ENCODE measurements at regions of chr14 and their contacts with region 1.

Region 1: DNA sequence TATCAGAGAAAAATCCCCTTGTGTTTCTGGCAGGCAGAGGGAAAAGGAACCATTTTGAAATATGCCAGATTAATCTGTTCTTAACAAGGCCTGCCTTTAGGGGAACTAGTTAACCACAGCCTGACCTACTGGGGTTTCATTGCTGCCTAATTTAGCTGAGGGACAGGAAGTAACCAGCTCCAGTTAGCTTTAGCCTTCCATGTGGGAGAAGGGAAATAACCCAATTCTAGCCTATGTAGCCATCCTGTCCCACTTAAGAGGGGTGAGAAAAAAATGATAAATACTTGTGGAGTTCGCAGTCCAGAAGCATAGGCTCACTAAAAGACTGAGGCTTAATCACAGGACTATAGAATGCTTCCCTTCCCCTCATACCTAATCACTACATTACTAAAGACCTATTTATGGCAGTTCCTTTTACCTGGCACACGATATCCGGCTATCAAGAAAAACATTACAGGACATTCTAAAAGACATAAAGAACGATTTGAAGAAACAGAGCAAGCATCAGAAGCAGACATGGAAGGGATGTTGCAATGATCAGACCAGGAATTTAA is 22.8 kb downstream of the COX8C start:
- DNase-seq: no peak
- H3K4me3 Mint-ChIP-seq: no peak overlapping the region
- H3K27ac Mint-ChIP-seq: no peak overlapping the region
- H3K4me1 Mint-ChIP-seq: no peaks in the 10 kb centered on the region
- H3K27me3 Mint-ChIP-seq: peaks cover 4% of the 10 kb centered on the region

Region 2: GRCh38 chr14:95206534-95206933 is 1836.7 kb after region 1 on chr14:
- intact Hi-C with region 1: loop called (anchors 5 kb)
- DNase-seq: no peak
- H3K4me3 Mint-ChIP-seq: no peak overlapping the region
- H3K27ac Mint-ChIP-seq: no peak overlapping the region
- H3K4me1 Mint-ChIP-seq: no peaks in the 10 kb centered on the region
- H3K27me3 Mint-ChIP-seq: peaks cover 5% of the 10 kb centered on the region